Vagina (tissue), 2 donors: ENCODE measurements at regions of chr6 and their contacts with region 1.

Region 1: DNA sequence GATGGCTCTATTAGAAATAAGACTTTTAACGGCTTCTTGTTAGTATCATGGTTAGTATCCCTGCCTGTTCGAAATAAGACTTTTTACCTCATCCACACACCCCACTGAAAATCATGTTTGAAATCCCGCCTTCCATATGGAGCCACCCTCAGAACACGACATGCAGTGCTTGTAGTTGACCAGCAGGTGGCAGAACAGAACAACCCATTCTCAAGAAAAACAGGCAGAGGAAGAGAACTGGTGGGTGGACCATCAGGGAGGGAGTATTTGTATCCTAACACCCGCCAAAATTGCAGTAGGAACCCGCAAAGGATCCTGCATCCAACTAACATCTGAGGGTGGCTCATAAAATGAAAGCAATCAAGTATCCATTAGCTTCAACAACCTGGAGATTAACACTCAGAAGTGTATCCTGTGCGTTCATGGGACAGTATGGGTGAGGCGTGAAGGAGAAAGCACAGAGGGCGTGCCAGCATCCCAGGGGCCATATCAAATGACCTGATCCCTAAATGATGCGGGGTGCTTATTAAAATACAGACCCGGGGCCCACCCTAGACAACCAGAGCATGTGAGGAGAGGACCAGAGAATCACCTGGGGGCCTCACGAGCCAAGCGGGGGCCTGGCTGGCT is 89.6 kb upstream of the NHSL1 start:
- DNase-seq: no peak
- H3K4me3 ChIP-seq: no peak overlapping the region
- H3K27ac ChIP-seq: no peak overlapping the region
- H3K4me1 ChIP-seq: peaks cover 16% of the 10 kb centered on the region
- H3K27me3 ChIP-seq: no peaks in the 10 kb centered on the region
- CTCF ChIP-seq: peak; percentile 84 to 93 (median 90)
- POLR2A ChIP-seq: no peak

Region 2: GRCh38 chr6:138188278-138188941 is 400.5 kb before region 1 on chr6:
- intact Hi-C with region 1: no loop called
- DNase-seq: no peak
- H3K4me3 ChIP-seq: no peak overlapping the region
- H3K27ac ChIP-seq: no peak overlapping the region
- H3K4me1 ChIP-seq: no peaks in the 10 kb centered on the region
- H3K27me3 ChIP-seq: no peaks in the 10 kb centered on the region
- CTCF ChIP-seq: no peak
- POLR2A ChIP-seq: no peak

Region 3: GRCh38 chr6:138431256-138432062 is 157.5 kb before region 1 on chr6:
- intact Hi-C with region 1: loop called (anchors 10 kb)
- DNase-seq: no peak
- H3K4me3 ChIP-seq: no peak overlapping the region
- H3K27ac ChIP-seq: no peak overlapping the region
- H3K4me1 ChIP-seq: peaks cover 9% of the 10 kb centered on the region
- H3K27me3 ChIP-seq: no peaks in the 10 kb centered on the region
- CTCF ChIP-seq: no peak
- POLR2A ChIP-seq: no peak

Region 4: DNA sequence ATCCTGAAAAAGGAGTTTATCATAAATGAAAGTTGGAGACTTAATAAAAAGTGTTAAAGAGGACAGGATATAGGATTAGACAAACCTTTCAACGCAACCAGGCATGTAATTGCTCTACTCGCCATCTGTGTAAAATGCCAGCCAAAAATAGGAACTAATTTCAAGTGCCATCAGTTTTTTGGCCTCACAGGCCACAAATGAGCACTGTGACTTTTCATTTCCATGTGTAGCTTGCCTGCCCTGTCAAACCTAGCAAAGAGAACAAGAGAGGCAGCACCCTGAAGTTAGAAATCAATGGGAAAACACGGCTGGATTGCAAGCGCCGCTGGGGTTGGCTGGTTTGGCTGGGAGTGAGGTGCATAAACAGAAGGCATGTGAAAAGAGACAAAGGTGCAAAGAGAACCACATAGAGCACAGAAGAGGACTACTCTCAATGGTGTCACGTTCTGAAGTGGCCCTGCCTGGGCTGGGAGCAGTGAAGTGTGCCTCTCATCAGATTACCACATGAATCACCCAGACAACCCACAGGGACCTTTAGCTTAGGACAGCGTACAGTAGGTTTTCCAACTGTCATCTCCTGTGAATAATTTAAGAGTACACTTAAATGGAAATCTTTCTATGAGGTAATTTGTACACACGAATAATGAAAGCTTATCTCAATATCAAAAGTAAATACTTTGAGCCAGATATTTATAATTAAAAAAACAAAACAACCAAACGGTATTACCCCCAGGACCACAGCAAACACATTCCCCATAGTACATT is 11.6 kb before region 1 on chr6:
- intact Hi-C with region 1: no loop called
- DNase-seq: no peak
- H3K4me3 ChIP-seq: no peak overlapping the region
- H3K27ac ChIP-seq: no peak overlapping the region
- H3K4me1 ChIP-seq: peaks cover under 1% of the 10 kb centered on the region
- H3K27me3 ChIP-seq: no peaks in the 10 kb centered on the region
- CTCF ChIP-seq: no peak
- POLR2A ChIP-seq: no peak

Region 5: DNA sequence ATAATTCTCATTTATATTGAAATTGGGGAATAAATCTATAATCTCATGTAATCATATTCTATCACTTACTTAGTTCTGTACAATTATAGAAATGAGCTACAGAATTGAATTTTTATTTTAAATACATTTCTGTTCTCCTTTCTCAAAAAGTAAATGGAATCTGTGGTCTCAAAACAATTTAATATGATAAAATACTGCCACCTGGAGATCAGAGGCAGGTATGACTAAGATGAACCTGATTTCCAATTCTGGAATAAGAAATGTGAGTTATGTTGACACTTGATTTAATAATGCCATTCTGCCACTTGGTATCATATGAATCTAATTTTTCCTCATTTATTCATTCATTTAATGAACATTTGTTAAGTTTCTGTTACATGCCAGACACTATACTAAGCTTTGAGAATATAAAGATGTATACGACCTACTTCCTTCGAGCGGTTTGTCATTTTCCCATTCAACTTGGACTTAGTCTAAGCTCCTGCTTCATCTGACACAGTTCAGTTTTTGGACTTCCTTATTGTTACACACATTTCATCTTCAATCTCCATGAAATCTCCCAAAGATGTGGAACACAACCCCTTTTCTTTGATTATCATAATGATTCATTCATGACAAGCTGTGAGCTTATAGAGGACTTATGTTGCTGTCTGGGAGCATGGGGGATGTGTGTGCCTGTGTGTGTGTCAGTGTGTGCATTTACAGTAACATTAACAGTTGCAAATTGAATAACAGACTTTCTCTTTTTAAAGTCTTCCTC is 177.2 kb after region 1 on chr6:
- intact Hi-C with region 1: loop called (anchors 5 kb)
- DNase-seq: no peak
- H3K4me3 ChIP-seq: no peak overlapping the region
- H3K27ac ChIP-seq: no peak overlapping the region
- H3K4me1 ChIP-seq: no peaks in the 10 kb centered on the region
- H3K27me3 ChIP-seq: no peaks in the 10 kb centered on the region
- CTCF ChIP-seq: peak; percentile 35 to 54 (median 47)
- POLR2A ChIP-seq: no peak